Cardiac septum (tissue), 1 donor: ENCODE measurements at regions of chr5 and their contacts with region 1.

Region 1: GRCh38 chr5:132736853-132737833 is at the start of gene KIF3A:
- DNase-seq: peak; percentile 98
- total RNA-seq, gene KIF3A: 10.9 TPM

Region 2: DNA sequence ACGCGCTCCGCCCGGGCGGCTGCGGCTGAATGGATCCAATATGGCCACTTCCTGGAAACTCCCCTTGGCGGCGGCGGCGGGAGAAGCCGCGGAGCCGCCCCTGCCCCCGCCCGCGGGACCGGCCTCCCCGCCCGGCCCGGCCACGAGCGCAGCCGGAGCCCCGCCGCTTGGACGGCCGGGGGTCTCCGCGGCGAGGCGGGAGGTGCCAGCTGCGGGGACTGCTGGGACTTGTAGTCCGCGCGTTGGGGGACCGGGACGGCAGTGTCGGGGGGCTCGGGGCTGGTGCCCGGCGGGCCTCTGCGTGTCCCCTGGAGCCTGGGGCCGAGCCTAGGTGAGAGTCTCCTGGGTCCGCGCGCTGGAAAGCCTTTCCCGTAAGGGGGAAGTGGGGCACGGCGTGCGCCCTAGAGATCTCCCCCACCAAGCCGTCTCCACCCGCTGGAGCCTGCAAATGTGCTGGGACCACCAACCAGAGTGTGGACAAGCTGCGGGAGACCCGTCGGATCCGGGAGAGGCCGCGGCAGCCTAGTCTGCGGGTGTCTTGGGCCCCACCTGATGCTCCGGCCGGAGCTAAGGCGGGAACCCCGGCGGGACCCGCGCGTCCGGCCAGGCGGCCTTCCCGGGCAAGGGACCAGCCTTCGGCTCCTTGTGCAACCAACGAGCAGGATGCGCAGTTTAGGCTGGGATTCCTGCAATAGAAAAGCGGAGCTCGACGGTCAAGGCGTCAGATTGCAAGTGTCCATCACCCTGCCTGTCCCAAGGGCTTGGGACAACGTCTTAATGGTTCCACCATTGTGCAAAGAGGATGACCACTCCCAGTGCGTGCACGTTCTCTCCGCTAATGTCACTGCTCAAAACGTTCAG is 40.3 kb after region 1 on chr5 and contains the start of gene SEPTIN8:
- intact Hi-C with region 1: loop called (anchors 5 kb)
- DNase-seq: peak; percentile 78
- total RNA-seq, gene SEPTIN8: 45.2 TPM